ENCODE measurements at regions of chr6 and their contacts with region 1.

Region 1: DNA sequence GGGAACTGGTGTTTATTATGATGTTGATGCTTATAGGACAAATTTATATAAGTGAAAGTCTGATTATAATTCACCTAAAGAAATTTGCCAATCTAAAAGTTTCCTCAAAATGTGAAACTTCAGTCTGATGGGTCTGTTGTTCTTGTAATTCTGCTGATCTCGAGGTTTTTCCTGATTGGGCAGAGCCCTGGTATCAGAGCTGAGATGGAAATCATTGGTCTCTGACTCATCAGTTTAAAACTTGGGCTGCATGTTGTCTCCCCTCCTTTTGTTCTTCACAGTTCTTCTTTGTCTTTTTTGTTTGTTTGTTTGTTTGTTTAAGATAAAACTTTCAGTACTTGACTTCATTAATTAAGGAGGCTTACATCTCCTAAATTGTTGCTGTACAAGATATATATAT is 5.9 kb downstream of the SMAP1 start:
- DNase-seq: no peak
- ATAC-seq: no peak; the same call in 1 of the 2 replicates
- H3K4me3 ChIP-seq: no peak overlapping the region
- H3K27ac ChIP-seq: no peak overlapping the region
- H3K4me1 ChIP-seq: peaks cover 29% of the 10 kb centered on the region
- H3K27me3 ChIP-seq: no peaks in the 10 kb centered on the region
- CTCF ChIP-seq: no peak

Region 2: DNA sequence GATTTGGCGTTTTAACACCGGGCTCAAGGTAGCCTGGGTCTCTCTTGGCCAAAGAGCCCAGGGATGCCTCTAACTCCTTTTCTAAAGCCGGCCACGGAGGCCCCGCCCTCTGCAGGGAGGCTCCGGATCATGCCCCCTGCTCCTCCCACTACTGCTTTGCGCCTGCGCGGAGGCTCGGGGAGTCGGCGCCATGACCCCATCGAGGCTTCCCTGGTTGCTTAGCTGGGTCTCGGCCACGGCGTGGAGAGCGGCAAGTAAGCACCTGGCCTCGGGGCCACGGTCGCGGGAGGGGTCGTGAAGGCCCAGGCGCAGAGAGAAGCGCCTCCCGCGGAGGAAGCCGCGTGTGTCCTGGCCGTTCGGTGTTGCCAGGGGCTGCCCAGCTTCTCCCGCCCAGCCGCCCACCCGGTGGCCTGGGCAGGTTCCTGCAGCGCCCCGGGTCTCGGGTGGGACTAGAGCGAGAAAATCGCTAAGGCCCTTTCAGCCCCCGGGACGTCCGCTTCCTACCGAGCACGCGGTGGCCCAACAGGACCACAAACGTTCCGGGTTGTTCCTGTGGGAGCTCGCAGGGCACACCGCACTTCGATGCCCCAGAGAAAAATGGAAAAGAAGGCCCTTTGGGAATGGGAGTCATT is 106.7 kb before region 1 on chr6 and contains the start of gene SDHAF4:
- CTCF ChIA-PET with region 1: no interaction called
- POLR2A ChIA-PET with region 1: no interaction called
- in situ Hi-C with region 1: no loop called
- intact Hi-C with region 1: loop called (anchors 5 kb)
- DNase-seq: peak; percentile 50
- ATAC-seq: peak; percentile 100
- H3K4me3 ChIP-seq: peak within 1 kb of the TSS; percentile 73 to 74
- H3K27ac ChIP-seq: peak within 1 kb of the TSS; percentile 88
- H3K4me1 ChIP-seq: peaks cover 12% of the 10 kb centered on the region; the same call in 1 of the 2 replicates
- H3K27me3 ChIP-seq: no peaks in the 10 kb centered on the region
- CTCF ChIP-seq: no peak
- total RNA-seq, gene SDHAF4: 14.4 TPM

Region 3: GRCh38 chr6:70616728-70617260 is 56.8 kb before region 1 on chr6:
- CTCF ChIA-PET with region 1: no interaction called
- POLR2A ChIA-PET with region 1: interaction called, 10 read pairs
- in situ Hi-C with region 1: no loop called
- intact Hi-C with region 1: no loop called
- DNase-seq: no peak
- ATAC-seq: no peak
- H3K4me3 ChIP-seq: no peak overlapping the region
- H3K27ac ChIP-seq: no peak overlapping the region
- H3K4me1 ChIP-seq: no peaks in the 10 kb centered on the region
- H3K27me3 ChIP-seq: peaks cover 2% of the 10 kb centered on the region; the same call in 1 of the 2 replicates
- CTCF ChIP-seq: no peak

Region 4: DNA sequence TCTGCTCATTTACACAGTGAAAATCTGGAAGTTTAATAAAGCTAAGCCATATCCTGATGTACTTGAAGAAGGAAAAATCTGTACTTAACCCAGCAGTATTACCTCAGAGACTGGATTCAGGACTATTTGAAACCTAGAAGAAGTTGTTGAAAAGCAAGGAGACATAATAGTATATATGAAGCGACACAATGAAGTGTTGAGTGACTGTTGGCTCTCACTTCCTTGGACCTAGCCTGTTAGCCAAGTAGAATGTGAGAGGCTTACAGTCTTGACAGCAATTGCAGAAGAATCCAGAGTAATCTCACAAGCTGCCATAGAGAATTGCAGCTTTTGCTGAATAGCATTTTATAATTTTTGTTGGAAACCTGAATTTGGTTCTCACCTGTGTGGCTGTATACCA is 20.8 kb after region 1 on chr6:
- CTCF ChIA-PET with region 1: no interaction called
- POLR2A ChIA-PET with region 1: interaction called, 13 read pairs
- in situ Hi-C with region 1: no loop called
- intact Hi-C with region 1: no loop called
- DNase-seq: no peak
- ATAC-seq: no peak
- H3K4me3 ChIP-seq: no peak overlapping the region
- H3K27ac ChIP-seq: no peak overlapping the region
- H3K4me1 ChIP-seq: no peaks in the 10 kb centered on the region
- H3K27me3 ChIP-seq: no peaks in the 10 kb centered on the region
- CTCF ChIP-seq: no peak

Region 5: GRCh38 chr6:70717038-70717801 is 43.6 kb after region 1 on chr6:
- CTCF ChIA-PET with region 1: no interaction called
- POLR2A ChIA-PET with region 1: no interaction called
- in situ Hi-C with region 1: no loop called
- intact Hi-C with region 1: no loop called
- DNase-seq: no peak
- ATAC-seq: no peak
- H3K4me3 ChIP-seq: no peak overlapping the region
- H3K27ac ChIP-seq: no peak overlapping the region
- H3K4me1 ChIP-seq: no peaks in the 10 kb centered on the region
- H3K27me3 ChIP-seq: no peaks in the 10 kb centered on the region
- CTCF ChIP-seq: no peak

Measured in Panc1 (cell line).